GM12878 (cell line): ENCODE measurements at regions of chr12 and their contacts with region 1.

Region 1: DNA sequence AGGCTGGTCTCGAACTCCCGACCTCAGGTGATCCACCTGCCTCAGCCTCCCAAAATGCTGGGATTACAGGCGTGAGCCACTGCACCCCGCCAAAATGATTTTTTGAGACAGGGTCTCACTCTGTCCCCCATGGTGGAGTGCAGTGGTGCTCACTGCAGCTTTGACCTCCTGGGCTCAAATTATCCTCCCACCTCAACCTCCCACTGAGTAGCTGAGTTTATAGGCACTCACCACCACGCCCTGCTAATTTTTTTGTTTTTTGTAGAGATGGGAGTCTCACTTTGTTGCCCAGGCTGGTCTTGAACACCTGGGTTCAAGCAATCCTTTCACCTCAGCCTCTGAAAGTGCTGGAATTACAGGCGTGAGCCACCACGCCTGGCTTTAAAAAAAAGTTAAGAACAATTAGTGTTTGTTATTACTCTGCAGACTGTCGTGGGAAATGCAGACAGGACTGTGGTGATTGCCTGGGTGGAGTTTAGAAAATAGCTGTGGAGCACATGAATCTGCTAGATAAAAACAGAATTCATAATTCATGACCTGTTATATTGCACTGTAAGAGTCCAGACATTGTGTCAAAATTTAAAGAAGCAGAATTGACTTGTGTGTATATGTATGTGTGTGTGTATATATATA is 9.2 kb upstream of the COX6A1 start:
- DNase-seq: no peak
- ATAC-seq: no peak
- H3K4me3 ChIP-seq: no peak overlapping the region
- H3K27ac ChIP-seq: no peak overlapping the region
- H3K4me1 ChIP-seq: no peaks in the 10 kb centered on the region
- H3K27me3 ChIP-seq: no peaks in the 10 kb centered on the region; a peak in 1 of 4 replicates
- CTCF ChIP-seq: no peak
- EP300 ChIP-seq: no peak
- POLR2A ChIP-seq: no peak
- RAD21 ChIP-seq: no peak

Region 2: GRCh38 chr12:120356567-120357030 is 72.1 kb before region 1 on chr12:
- CTCF ChIA-PET with region 1: interaction called, 12 read pairs
- POLR2A ChIA-PET with region 1: no interaction called
- RAD21 ChIA-PET with region 1: interaction called, 11 read pairs
- SMC1A ChIA-PET with region 1: interaction called, 3 read pairs
- in situ Hi-C with region 1: loop called (anchors 5 kb)
- intact Hi-C with region 1: loop called (anchors 1 kb)
- DNase-seq: peak; percentile 17
- ATAC-seq: peak; percentile 97
- H3K4me3 ChIP-seq: no peak overlapping the region
- H3K27ac ChIP-seq: no peak overlapping the region
- H3K4me1 ChIP-seq: no peaks in the 10 kb centered on the region
- H3K27me3 ChIP-seq: peaks cover 0 to 1% of the 10 kb centered on the region in 2 experiments; a peak in 1 of 4 replicates
- CTCF ChIP-seq: peak; percentile 85 to 94 (median 89)
- EP300 ChIP-seq: no peak
- POLR2A ChIP-seq: no peak
- RAD21 ChIP-seq: peak; percentile 75

Region 3: DNA sequence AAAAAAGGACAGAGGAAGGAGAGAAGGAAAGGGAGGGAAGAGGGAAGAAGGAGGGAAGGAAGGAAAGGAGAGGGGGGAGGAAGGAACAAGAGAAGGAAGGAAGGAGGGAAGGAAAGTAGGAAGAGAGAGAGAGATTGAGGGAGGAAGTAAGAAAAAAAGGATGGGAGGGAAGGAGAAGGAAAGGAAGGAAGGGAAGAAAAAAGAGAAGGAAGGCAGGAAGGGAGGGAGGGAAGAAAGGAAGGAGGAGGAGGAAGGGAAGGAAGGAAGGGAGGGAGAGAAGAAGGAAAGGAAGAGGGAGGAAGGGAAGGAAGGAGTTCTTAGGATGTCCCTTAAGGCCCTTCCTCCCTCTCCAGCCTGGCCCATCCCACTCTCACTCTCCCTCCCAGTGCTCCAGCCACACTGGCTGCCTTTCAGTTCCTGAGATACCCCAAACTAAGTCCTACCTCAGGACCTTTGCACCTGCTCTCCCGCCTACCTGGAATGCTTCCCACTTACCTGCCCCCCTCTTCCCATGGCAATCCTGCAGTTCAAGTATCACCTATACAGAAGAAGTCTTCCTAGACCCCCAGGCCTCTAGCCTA is 38.1 kb before region 1 on chr12:
- CTCF ChIA-PET with region 1: no interaction called
- POLR2A ChIA-PET with region 1: no interaction called
- RAD21 ChIA-PET with region 1: no interaction called
- SMC1A ChIA-PET with region 1: no interaction called
- in situ Hi-C with region 1: no loop called
- intact Hi-C with region 1: no loop called
- DNase-seq: no peak
- ATAC-seq: no peak
- H3K4me3 ChIP-seq: no peak overlapping the region
- H3K27ac ChIP-seq: no peak overlapping the region
- H3K4me1 ChIP-seq: no peaks in the 10 kb centered on the region
- H3K27me3 ChIP-seq: no peaks in the 10 kb centered on the region; a peak in 3 of 4 replicates
- CTCF ChIP-seq: no peak
- EP300 ChIP-seq: no peak
- POLR2A ChIP-seq: no peak
- RAD21 ChIP-seq: no peak